ENCODE measurements at regions of chr4 and their contacts with region 1.

Region 1: GRCh38 chr4:173168396-173169177 is at the start of gene GALNT7:
- DNase-seq: peak; percentile 34 to 83 (median 55)
- ATAC-seq: peak; percentile 66
- H3K4me3 ChIP-seq: peak within 1 kb of the TSS; percentile 85
- H3K4me3 Mint-ChIP-seq: peak within 1 kb of the TSS; percentile 100
- H3K27ac ChIP-seq: peak within 1 kb of the TSS; percentile 58 to 66
- H3K27ac Mint-ChIP-seq: peak within 1 kb of the TSS; percentile 85
- H3K4me1 ChIP-seq: peaks cover 20% of the 10 kb centered on the region
- H3K4me1 Mint-ChIP-seq: peaks cover 50% of the 10 kb centered on the region
- H3K27me3 ChIP-seq: no peaks in the 10 kb centered on the region
- H3K27me3 Mint-ChIP-seq: no peaks in the 10 kb centered on the region
- CTCF ChIP-seq: no peak
- total RNA-seq, gene GALNT7: 4.6 to 4.8 TPM

Region 2: DNA sequence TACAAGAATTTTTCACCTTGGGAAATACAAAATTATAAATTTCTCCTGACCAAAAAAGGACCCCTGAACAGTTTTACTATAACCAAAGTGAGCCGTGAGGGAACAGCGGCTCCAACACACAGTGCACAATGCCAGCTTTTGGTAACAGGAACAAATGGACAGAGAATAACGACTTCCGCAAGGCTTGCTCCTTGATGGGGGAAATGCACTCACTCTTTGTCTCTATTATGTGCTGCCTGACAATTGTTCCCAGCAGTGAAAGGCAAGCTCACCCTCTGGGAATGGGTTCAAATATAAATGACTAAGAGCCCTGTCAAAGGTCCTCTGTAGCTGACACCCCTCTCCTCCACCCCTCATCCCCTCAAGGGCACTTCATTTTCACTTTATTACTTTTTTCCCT is 325.8 kb before region 1 on chr4:
- CTCF ChIA-PET with region 1: no interaction called
- POLR2A ChIA-PET with region 1: no interaction called
- intact Hi-C with region 1: no loop called
- DNase-seq: no peak
- ATAC-seq: no peak
- H3K4me3 ChIP-seq: no peak overlapping the region
- H3K4me3 Mint-ChIP-seq: no peak overlapping the region
- H3K27ac ChIP-seq: no peak overlapping the region
- H3K27ac Mint-ChIP-seq: no peak overlapping the region
- H3K4me1 ChIP-seq: no peaks in the 10 kb centered on the region
- H3K4me1 Mint-ChIP-seq: no peaks in the 10 kb centered on the region
- H3K27me3 ChIP-seq: no peaks in the 10 kb centered on the region
- H3K27me3 Mint-ChIP-seq: peaks cover 9% of the 10 kb centered on the region
- CTCF ChIP-seq: no peak

Region 3: GRCh38 chr4:173013232-173013930 is 155.2 kb before region 1 on chr4:
- CTCF ChIA-PET with region 1: no interaction called
- POLR2A ChIA-PET with region 1: interaction called, 3 read pairs
- intact Hi-C with region 1: loop called in 1 of 2 experiments (anchors 10 kb)
- DNase-seq: peak; percentile 19 to 70 (median 42)
- ATAC-seq: peak; percentile 52
- H3K4me3 ChIP-seq: no peak overlapping the region
- H3K4me3 Mint-ChIP-seq: no peak overlapping the region
- H3K27ac ChIP-seq: no peak overlapping the region
- H3K27ac Mint-ChIP-seq: no peak overlapping the region
- H3K4me1 ChIP-seq: no peaks in the 10 kb centered on the region
- H3K4me1 Mint-ChIP-seq: no peaks in the 10 kb centered on the region
- H3K27me3 ChIP-seq: no peaks in the 10 kb centered on the region
- H3K27me3 Mint-ChIP-seq: no peaks in the 10 kb centered on the region
- CTCF ChIP-seq: peak; percentile 81

Region 4: DNA sequence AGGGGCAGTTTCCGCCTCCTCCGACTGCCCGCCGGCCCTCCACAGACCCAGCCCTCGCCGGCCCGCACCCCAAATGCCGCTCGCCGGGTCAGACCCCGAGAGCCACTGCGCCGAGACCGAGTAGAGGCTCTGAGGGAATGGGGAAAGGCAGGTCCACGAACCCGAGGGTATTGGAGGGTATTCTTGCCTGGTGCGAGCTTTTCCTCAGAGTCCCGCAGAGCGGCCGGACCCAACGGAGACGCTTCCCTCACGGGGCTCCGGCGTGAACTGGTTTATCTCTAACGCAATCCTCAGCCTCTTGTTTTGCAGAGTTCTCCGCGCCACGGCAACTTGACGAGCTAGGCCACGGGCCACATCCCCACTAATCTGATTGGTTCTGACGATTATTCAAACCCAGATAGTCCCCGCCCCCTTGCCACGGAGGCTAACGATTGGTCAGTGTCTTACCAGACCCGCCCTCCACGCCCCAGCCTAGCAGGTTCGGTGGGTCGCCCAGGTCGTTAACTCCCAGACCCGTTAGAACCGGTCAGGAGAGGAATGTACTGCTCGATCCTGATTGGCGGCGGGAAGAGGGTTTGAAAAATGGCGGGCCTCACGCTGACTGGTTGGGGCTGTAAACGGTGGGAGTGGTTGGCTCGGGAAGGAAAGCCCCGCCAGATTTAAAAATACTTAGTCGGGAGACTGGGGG is 165.6 kb after region 1 on chr4 and contains the start of gene HMGB2:
- CTCF ChIA-PET with region 1: no interaction called
- POLR2A ChIA-PET with region 1: interaction called, 21 read pairs
- intact Hi-C with region 1: loop called in 1 of 2 experiments (anchors 5 kb)
- DNase-seq: peak; percentile 99 to 100 (median 100)
- ATAC-seq: peak; percentile 92
- H3K4me3 ChIP-seq: peak within 1 kb of the TSS; percentile 88
- H3K4me3 Mint-ChIP-seq: peak within 1 kb of the TSS; percentile 98
- H3K27ac ChIP-seq: peak within 1 kb of the TSS; percentile 78 to 93
- H3K27ac Mint-ChIP-seq: peak within 1 kb of the TSS; percentile 96
- H3K4me1 ChIP-seq: peaks cover 16% of the 10 kb centered on the region
- H3K4me1 Mint-ChIP-seq: peaks cover 37% of the 10 kb centered on the region
- H3K27me3 ChIP-seq: no peaks in the 10 kb centered on the region
- H3K27me3 Mint-ChIP-seq: peaks cover 13% of the 10 kb centered on the region
- CTCF ChIP-seq: no peak
- total RNA-seq, gene HMGB2: 228 to 232 TPM

Region 5: GRCh38 chr4:173370477-173371291 is 202.1 kb after region 1 on chr4 and contains the start of gene SAP30:
- CTCF ChIA-PET with region 1: no interaction called
- POLR2A ChIA-PET with region 1: interaction called, 15 read pairs
- intact Hi-C with region 1: loop called in 1 of 2 experiments (anchors 10 kb)
- DNase-seq: peak; percentile 94 to 98 (median 98)
- ATAC-seq: peak; percentile 86
- H3K4me3 ChIP-seq: peak within 1 kb of the TSS; percentile 96
- H3K4me3 Mint-ChIP-seq: peak within 1 kb of the TSS; percentile 98
- H3K27ac ChIP-seq: peak within 1 kb of the TSS; percentile 58 to 88
- H3K27ac Mint-ChIP-seq: peak within 1 kb of the TSS; percentile 87
- H3K4me1 ChIP-seq: peaks cover 27% of the 10 kb centered on the region
- H3K4me1 Mint-ChIP-seq: peaks cover 37% of the 10 kb centered on the region
- H3K27me3 ChIP-seq: no peaks in the 10 kb centered on the region
- H3K27me3 Mint-ChIP-seq: peaks cover 27% of the 10 kb centered on the region
- CTCF ChIP-seq: no peak
- total RNA-seq, gene SAP30: 2.5 to 3.9 TPM

Region 6: DNA sequence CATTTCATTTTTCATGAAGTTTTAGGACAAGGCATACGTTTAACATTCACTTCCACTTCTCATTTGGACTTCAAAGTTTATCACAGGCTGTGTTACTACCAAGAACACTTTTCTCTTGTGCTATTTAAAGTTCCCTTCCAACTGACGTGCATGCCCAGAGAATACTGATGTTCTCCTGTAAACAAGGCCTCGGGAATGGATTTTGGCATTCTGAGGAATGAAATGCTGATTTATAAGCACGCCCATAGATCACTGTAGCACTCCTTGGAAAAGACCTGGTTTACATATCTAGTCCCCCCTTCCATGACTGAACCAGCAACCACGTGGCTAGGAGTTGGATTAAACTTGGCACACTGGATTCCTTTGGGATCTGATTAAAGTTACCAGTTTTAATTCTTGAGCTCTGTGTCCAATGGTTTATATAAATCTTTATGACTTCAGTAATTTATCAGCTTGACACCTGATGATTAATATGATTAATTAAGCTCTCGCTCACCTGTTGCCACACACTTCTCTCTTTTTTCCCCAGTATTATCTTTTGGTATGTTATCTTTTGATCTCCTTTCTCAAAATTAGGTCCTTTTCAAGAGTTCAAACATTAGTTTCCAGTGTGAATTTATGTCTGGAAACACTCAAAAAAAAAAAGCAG is 483.8 kb after region 1 on chr4:
- CTCF ChIA-PET with region 1: no interaction called
- POLR2A ChIA-PET with region 1: no interaction called
- intact Hi-C with region 1: no loop called
- DNase-seq: no peak
- ATAC-seq: no peak
- H3K4me3 ChIP-seq: no peak overlapping the region
- H3K4me3 Mint-ChIP-seq: no peak overlapping the region
- H3K27ac ChIP-seq: no peak overlapping the region
- H3K27ac Mint-ChIP-seq: no peak overlapping the region
- H3K4me1 ChIP-seq: no peaks in the 10 kb centered on the region
- H3K4me1 Mint-ChIP-seq: no peaks in the 10 kb centered on the region
- H3K27me3 ChIP-seq: no peaks in the 10 kb centered on the region
- H3K27me3 Mint-ChIP-seq: peaks cover 10% of the 10 kb centered on the region
- CTCF ChIP-seq: no peak

Region 7: DNA sequence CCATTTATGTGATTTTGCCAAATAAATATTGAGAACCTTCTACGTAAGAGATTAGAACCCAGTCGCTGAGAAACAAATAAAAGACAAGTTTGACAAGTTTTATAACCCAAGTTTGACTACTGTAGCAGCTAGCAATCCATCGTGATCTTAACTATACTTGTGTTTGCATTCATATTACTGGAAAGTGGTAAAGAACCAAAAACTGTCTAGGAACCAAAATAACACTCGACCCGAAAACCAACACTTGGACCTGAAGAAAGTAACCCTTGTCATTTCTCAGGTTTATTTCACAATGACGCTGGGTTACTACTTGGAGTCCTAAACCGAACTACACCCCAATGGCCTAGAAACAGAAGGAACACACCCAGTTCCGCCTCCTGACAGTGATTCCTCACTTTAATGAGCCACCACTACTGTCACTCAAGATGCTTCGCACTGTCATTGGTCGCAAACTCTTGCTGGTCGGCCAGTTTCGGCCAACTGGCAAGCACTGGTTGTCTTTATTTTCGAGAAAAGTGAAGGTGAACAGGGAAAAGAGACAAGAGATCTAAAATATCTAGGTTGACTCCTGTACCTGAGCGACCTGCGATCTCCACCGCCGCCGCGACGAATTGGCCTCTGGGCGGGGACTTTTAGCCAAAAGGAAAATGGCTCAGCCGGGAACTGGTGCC is 1114.4 kb after region 1 on chr4:
- CTCF ChIA-PET with region 1: no interaction called
- POLR2A ChIA-PET with region 1: interaction called, 3 read pairs
- intact Hi-C with region 1: loop called in 1 of 2 experiments (anchors 10 kb)
- DNase-seq: peak in 13 of 14 experiments; percentile 57 to 93 (median 68)
- ATAC-seq: peak; percentile 92
- H3K4me3 ChIP-seq: peak overlapping the region; percentile 91
- H3K4me3 Mint-ChIP-seq: peak overlapping the region; percentile 95
- H3K27ac ChIP-seq: peak overlapping the region; percentile 95 to 99
- H3K27ac Mint-ChIP-seq: peak overlapping the region; percentile 99
- H3K4me1 ChIP-seq: peaks cover 11% of the 10 kb centered on the region
- H3K4me1 Mint-ChIP-seq: peaks cover 90% of the 10 kb centered on the region
- H3K27me3 ChIP-seq: no peaks in the 10 kb centered on the region
- H3K27me3 Mint-ChIP-seq: no peaks in the 10 kb centered on the region
- CTCF ChIP-seq: no peak